Uterus (tissue), 4 donors: ENCODE measurements at regions of chr12 and their contacts with region 1.

Region 1: GRCh38 chr12:115598871-115599811 is 678.4 kb downstream of the MED13L start:
- DNase-seq: no peak
- H3K4me3 ChIP-seq: peak overlapping the region in 1 of 2 donors; percentile 12
- H3K27ac ChIP-seq: no peak overlapping the region
- H3K4me1 ChIP-seq: no peaks in the 10 kb centered on the region
- H3K27me3 ChIP-seq: no peaks in the 10 kb centered on the region
- CTCF ChIP-seq: no peak
- POLR2A ChIP-seq: no peak

Region 2: DNA sequence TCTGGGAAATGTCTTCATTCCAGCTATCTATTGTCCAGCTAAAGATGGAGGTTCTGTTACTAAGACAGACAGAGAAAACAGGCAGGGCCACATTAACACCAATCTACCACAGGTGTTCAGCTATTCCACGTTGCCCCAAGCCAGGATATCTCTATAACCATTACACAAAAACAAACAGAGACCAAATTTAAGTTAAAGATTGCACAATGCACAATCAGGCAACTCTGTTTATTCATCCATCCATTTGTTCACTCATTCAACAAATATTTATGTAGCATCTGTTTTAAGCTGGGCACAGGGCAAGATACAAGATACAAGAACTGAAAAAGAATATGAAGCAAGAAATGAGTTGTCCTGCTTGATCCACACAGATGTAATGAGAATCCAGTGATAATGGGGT is 49.3 kb after region 1 on chr12:
- intact Hi-C with region 1: loop called (anchors 5 kb)
- DNase-seq: no peak
- H3K4me3 ChIP-seq: no peak overlapping the region
- H3K27ac ChIP-seq: no peak overlapping the region
- H3K4me1 ChIP-seq: no peaks in the 10 kb centered on the region
- H3K27me3 ChIP-seq: no peaks in the 10 kb centered on the region
- CTCF ChIP-seq: no peak
- POLR2A ChIP-seq: no peak

Region 3: GRCh38 chr12:115661112-115661511 is 62.0 kb after region 1 on chr12:
- intact Hi-C with region 1: no loop called
- DNase-seq: peak in 1 of 2 donors; percentile 16
- H3K4me3 ChIP-seq: no peak overlapping the region
- H3K27ac ChIP-seq: peak overlapping the region; percentile 29 to 45
- H3K4me1 ChIP-seq: no peaks in the 10 kb centered on the region
- H3K27me3 ChIP-seq: no peaks in the 10 kb centered on the region
- CTCF ChIP-seq: no peak
- POLR2A ChIP-seq: no peak

Region 4: DNA sequence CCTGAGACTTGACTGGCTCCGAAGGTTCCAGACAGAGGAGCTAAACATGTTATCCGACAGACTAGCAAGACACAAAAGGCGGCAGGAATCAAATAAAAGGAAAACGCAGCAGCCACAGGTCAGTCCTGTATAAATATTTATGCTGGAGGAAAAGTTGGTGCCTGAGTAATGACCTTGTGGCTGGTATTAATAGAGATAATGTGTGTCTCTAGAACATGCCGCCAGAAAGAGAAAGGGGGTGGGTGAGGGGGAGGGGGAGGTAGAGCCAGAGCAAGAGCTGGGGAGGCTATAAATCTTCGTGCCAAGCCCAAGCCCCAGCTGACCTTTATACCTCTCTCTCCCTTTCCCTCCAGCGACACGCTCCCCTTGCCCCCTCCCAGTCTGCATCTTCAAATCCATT is 88.0 kb after region 1 on chr12:
- intact Hi-C with region 1: no loop called
- DNase-seq: no peak
- H3K4me3 ChIP-seq: no peak overlapping the region
- H3K27ac ChIP-seq: no peak overlapping the region
- H3K4me1 ChIP-seq: no peaks in the 10 kb centered on the region
- H3K27me3 ChIP-seq: no peaks in the 10 kb centered on the region
- CTCF ChIP-seq: no peak
- POLR2A ChIP-seq: no peak